ENCODE measurements at regions of chr3 and their contacts with region 1.

Region 1: GRCh38 chr3:69306239-69307185 is 79.4 kb downstream of the FRMD4B start:
- DNase-seq: peak; percentile 81
- H3K4me3 Mint-ChIP-seq: no peak overlapping the region
- H3K27ac Mint-ChIP-seq: no peak overlapping the region
- H3K4me1 Mint-ChIP-seq: peaks cover 23% of the 10 kb centered on the region
- H3K27me3 Mint-ChIP-seq: peaks cover 3% of the 10 kb centered on the region

Region 2: GRCh38 chr3:69084326-69085167 is 222.0 kb before region 1 on chr3 and contains the start of gene ARL6IP5:
- CTCF ChIA-PET with region 1: no interaction called
- POLR2A ChIA-PET with region 1: interaction called, 4 read pairs
- intact Hi-C with region 1: loop called (anchors 1 kb)
- DNase-seq: peak; percentile 96
- H3K4me3 Mint-ChIP-seq: peak within 1 kb of the TSS; percentile 97
- H3K27ac Mint-ChIP-seq: peak within 1 kb of the TSS; percentile 97
- H3K4me1 Mint-ChIP-seq: peaks cover 57% of the 10 kb centered on the region
- H3K27me3 Mint-ChIP-seq: no peaks in the 10 kb centered on the region
- total RNA-seq, gene ARL6IP5: 93.9 to 94.8 TPM

Region 3: GRCh38 chr3:69161587-69162307 is 144.8 kb before region 1 on chr3:
- CTCF ChIA-PET with region 1: interaction called, 290 read pairs
- POLR2A ChIA-PET with region 1: interaction called, 4 read pairs
- intact Hi-C with region 1: loop called (anchors 1 kb)
- DNase-seq: peak; percentile 35
- H3K4me3 Mint-ChIP-seq: no peak overlapping the region
- H3K27ac Mint-ChIP-seq: no peak overlapping the region
- H3K4me1 Mint-ChIP-seq: peaks cover 14% of the 10 kb centered on the region
- H3K27me3 Mint-ChIP-seq: peaks cover 6% of the 10 kb centered on the region

Region 4: GRCh38 chr3:69189487-69189886 is 117.0 kb before region 1 on chr3:
- CTCF ChIA-PET with region 1: interaction called, 34 read pairs
- POLR2A ChIA-PET with region 1: interaction called, 3 read pairs
- intact Hi-C with region 1: no loop called
- DNase-seq: no peak
- H3K4me3 Mint-ChIP-seq: no peak overlapping the region
- H3K27ac Mint-ChIP-seq: no peak overlapping the region
- H3K4me1 Mint-ChIP-seq: peaks cover 25% of the 10 kb centered on the region
- H3K27me3 Mint-ChIP-seq: no peaks in the 10 kb centered on the region

Region 5: GRCh38 chr3:69212411-69213139 is 93.9 kb before region 1 on chr3:
- CTCF ChIA-PET with region 1: interaction called, 26 read pairs
- POLR2A ChIA-PET with region 1: interaction called, 10 read pairs
- intact Hi-C with region 1: loop called (anchors 1 kb)
- DNase-seq: no peak
- H3K4me3 Mint-ChIP-seq: no peak overlapping the region
- H3K27ac Mint-ChIP-seq: peak overlapping the region; percentile 76
- H3K4me1 Mint-ChIP-seq: peaks cover 52% of the 10 kb centered on the region
- H3K27me3 Mint-ChIP-seq: no peaks in the 10 kb centered on the region

Region 6: DNA sequence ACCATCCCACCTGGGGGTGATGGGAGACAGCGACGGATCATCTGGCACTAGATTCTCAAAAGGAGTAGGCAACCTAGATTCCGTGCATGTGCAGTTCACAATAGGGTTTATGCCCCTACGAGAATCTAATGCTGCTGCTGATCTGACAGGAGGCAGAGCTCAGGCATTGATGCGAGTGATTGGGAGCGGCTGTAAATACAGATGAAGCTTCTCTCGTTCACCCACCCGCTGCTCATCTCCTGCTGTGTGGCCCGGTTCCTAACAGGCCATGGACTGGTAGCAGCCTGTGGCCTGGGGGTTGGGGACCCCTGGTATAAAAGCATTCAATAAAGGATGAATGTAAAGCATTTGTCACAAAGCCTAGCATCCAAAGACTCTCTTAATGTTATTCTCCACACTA is 47.4 kb before region 1 on chr3:
- CTCF ChIA-PET with region 1: no interaction called
- POLR2A ChIA-PET with region 1: no interaction called
- intact Hi-C with region 1: no loop called
- DNase-seq: no peak
- H3K4me3 Mint-ChIP-seq: no peak overlapping the region
- H3K27ac Mint-ChIP-seq: no peak overlapping the region
- H3K4me1 Mint-ChIP-seq: no peaks in the 10 kb centered on the region
- H3K27me3 Mint-ChIP-seq: no peaks in the 10 kb centered on the region

Region 7: DNA sequence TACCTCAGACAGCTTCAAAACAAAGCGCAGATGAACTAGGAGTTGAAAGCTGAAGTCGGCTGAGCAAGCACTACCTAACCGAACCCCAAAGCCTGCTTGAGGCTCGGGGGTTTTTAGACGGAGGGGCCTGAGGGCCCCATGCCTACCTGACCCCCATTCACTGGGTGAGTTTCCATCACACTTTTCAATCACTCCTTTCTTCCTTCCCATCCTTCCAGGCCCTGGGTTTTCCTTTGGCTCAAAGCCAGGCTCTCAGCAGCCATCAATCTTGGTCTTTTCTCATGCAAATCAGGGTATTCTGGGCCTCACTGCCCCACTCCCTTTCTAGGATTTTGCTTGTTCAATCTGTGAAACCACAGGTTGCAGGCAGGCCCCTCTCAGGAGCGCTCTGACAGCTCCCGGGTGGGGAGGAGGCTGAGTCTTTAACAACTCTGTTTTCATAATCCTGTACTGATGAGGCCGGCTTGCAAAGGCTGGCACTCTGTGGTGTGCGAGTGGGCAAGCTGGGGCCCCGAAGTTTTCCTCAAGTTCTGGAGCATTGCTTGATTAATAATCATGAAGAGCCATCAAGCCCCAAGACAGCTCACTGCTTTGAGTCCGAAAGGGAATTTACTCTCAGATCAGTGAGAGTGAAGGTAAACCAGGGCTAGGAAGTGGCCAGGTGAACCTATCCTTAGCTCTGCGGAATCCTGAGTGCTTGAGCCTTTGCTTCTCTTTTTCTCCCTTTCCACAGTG is 18.2 kb before region 1 on chr3:
- CTCF ChIA-PET with region 1: interaction called, 57 read pairs
- POLR2A ChIA-PET with region 1: interaction called, 11 read pairs
- intact Hi-C with region 1: loop called (anchors 1 kb)
- DNase-seq: peak; percentile 86
- H3K4me3 Mint-ChIP-seq: peak overlapping the region; percentile 31
- H3K27ac Mint-ChIP-seq: peak overlapping the region; percentile 61
- H3K4me1 Mint-ChIP-seq: peaks cover 29% of the 10 kb centered on the region
- H3K27me3 Mint-ChIP-seq: no peaks in the 10 kb centered on the region

Region 8: DNA sequence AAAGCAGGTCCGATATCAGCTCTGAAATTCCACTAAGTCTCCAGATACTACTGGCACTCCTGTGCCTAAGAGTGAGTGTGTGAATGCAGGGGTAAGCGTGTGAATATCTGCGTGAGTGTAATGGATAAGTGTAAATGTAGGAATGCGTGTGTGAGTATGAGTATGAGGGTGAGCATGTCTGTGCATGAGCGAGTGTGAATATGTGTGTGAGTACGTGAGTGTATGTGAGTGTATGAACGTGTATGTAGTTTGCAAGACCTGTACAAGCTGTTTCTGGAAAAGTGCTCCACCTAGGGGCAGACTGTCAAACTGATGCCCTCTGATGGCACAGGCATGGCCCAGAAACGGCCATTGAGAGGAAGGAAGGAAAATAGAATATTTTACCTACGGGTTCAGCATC is 103.7 kb after region 1 on chr3:
- CTCF ChIA-PET with region 1: interaction called, 20 read pairs
- POLR2A ChIA-PET with region 1: no interaction called
- intact Hi-C with region 1: loop called (anchors 2 kb)
- DNase-seq: peak; percentile 81
- H3K4me3 Mint-ChIP-seq: no peak overlapping the region
- H3K27ac Mint-ChIP-seq: no peak overlapping the region
- H3K4me1 Mint-ChIP-seq: peaks cover 4% of the 10 kb centered on the region
- H3K27me3 Mint-ChIP-seq: peaks cover 3% of the 10 kb centered on the region

Region 9: DNA sequence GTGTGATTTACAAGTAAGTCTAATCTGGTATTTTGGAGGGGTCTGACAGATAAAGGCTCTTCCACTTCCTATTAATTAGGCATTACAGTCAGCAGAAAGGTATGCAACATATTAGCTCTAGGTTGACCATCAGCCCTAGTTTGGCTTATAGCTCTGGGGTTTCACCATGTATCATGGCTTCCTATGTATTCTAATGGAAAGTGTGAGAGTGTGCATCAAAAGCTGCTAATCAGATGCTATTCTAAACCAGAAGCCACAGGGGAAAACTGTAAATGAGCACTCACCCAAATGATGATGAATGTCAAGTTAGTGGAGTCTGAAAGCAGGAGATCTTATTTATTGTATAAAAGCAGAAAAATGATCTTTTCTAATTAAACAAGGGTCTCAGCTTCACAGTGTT is 283.6 kb after region 1 on chr3:
- CTCF ChIA-PET with region 1: no interaction called
- POLR2A ChIA-PET with region 1: no interaction called
- intact Hi-C with region 1: no loop called
- DNase-seq: no peak
- H3K4me3 Mint-ChIP-seq: no peak overlapping the region
- H3K27ac Mint-ChIP-seq: no peak overlapping the region
- H3K4me1 Mint-ChIP-seq: no peaks in the 10 kb centered on the region
- H3K27me3 Mint-ChIP-seq: no peaks in the 10 kb centered on the region

Measured in activated CD4-positive, alpha-beta memory T cell treated with anti-CD3 and anti-CD28 coated beads for 36 hours (primary cell).